Dorsolateral prefrontal cortex (tissue), 120 donors: ENCODE measurements at regions of chr15 and their contacts with region 1.

Region 1: DNA sequence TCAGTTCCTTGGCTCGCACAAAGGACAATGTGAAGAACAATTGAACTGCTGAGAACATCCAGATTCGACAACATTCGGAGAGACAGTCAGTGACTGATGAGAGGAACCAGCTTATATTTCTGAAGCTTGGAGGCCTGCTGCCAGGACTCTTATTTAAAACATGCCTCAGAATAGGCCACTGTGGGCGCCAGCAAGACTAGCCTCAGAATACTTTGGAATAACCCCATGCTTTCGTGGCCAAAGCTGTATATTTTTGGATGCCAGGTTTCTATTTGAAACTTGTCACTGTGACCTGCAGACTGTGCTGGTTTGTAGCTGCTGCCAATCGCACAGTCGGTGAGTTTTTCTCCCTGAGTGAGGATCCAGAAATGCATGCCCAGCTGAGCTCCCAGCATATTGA is 129.9 kb upstream of the UBE3A start:
- DNase-seq: peak in 6 of 10 donors; percentile 33 to 80 (median 63)
- H3K4me3 ChIP-seq: no peak overlapping the region
- H3K27ac ChIP-seq: peak overlapping the region in 40 of 59 donors; percentile 1 to 70 (median 39)
- H3K27me3 ChIP-seq: no peaks in the 10 kb centered on the region
- CTCF ChIP-seq: no peak

Region 2: DNA sequence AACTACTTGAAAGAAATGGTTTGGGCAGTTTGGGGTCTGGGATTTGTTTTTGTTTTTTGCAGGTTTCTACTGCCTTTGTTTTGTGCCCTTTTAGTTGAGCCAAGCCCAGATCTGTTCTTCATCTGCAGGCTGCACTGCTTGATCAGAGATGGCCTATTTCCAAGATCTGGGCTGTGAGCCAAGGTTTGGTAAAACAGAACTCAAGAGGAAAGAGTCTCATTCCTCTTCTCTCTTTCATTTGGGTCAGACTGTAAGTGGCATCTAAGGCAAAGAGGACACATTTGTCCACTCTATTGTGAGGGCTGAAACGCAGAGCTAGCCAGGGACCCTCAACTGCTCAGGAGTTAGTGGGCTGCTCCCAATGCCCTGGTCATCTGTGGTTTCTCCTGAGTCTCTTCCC is 25.6 kb before region 1 on chr15:
- intact Hi-C with region 1: no loop called
- DNase-seq: peak in 7 of 10 donors; percentile 56 to 80 (median 67)
- H3K4me3 ChIP-seq: no peak overlapping the region
- H3K27ac ChIP-seq: peak overlapping the region in 38 of 59 donors; percentile 4 to 75 (median 51)
- H3K27me3 ChIP-seq: no peaks in the 10 kb centered on the region
- CTCF ChIP-seq: peak in 5 of 56 donors; percentile 9 to 32 (median 15)

Region 3: DNA sequence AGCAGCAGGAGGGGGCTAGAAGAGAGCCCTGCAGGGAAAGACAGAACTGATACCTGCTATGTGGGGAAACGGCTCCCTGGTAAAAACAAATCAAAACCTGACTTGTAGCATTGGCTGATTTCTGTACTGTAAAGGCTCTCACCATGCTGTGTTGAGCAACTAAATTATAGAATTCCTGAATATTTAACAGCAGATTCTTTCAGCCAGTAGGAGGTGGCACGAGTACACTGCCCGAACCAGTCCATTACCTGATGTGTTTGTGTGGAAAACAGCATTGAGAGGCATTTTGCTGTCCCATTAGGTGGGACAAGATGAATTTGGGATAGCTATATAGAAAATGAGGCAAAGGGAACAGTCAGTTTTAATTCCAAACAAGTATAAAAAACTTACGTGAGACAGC is 93.1 kb after region 1 on chr15:
- intact Hi-C with region 1: loop called in 1 of 2 experiments (anchors 10 kb)
- DNase-seq: no peak
- H3K4me3 ChIP-seq: no peak overlapping the region
- H3K27ac ChIP-seq: no peak overlapping the region
- H3K27me3 ChIP-seq: no peaks in the 10 kb centered on the region
- CTCF ChIP-seq: no peak